Posterior cingulate gyrus (tissue), 11 donors: ENCODE measurements at regions of chr7 and their contacts with region 1.

Region 1: GRCh38 chr7:73667344-73668102 is at the start of gene VPS37D:
- DNase-seq: peak; percentile 73 to 98 (median 88)

Region 2: DNA sequence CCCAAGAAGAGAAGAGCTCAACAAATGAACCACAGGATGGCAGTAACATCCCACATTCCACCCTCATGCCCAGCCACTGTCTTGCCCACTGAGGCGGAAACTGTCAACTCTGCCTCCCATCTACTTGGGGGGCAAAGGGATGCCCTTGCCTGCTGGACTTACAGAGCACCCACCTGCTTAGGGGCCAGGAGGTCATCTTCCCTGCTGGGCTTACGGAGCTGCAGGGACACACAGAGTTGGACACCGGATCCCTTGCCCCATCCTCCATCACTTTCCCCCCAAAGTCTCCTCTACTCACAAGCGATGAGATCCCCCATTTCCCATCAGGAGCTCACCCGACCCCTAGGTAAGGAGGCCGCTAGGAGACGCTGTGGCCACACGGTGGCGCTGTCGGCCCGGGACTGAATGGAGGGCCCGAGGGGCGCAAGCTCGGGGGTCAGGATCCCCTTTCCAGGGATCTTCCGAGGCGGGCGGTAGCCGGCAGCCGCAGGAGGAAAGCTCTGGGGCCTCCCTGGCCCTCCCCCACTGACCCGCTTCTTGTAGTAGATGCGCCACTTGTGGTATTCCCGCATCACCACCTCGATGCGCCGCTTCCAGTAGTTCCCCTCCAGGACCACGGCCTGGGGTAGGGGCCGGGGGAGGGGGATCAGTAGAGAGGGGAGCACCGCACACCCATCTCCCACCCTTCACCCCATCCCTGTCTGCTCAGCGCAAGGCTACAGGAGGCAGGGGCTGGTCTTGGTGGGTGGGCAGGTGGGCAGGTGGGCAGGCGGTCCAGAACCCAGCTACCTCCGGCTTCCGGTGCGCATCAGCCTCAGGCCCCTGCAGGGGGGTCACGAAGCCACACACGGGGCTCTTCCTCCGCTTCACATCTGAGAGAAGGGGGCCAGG is 60.5 kb before region 1 on chr7:
- intact Hi-C with region 1: loop called (anchors 10 kb)
- DNase-seq: peak in 7 of 10 donors; percentile 45 to 92 (median 63)

Region 3: DNA sequence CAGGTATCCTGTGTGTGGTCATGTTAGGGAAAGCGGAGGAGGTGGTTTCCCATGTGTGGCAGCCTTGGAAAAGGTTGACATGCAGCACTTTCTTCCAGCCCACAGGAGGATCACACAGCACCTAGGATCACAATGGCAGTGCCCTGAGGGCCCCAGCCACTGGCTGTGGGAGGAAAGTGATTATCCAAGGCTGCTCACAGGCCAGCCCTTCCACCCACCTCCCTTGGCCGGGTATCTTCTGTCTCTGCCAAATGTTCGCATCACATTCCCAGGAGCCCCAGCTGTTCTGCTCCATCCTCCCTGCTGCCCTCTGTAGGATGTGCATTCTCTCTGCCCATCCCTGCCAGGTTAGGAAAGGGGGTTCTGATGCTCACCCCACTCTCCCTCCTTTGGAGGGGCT is 40.7 kb before region 1 on chr7:
- intact Hi-C with region 1: loop called (anchors 5 kb)
- DNase-seq: no peak

Region 4: DNA sequence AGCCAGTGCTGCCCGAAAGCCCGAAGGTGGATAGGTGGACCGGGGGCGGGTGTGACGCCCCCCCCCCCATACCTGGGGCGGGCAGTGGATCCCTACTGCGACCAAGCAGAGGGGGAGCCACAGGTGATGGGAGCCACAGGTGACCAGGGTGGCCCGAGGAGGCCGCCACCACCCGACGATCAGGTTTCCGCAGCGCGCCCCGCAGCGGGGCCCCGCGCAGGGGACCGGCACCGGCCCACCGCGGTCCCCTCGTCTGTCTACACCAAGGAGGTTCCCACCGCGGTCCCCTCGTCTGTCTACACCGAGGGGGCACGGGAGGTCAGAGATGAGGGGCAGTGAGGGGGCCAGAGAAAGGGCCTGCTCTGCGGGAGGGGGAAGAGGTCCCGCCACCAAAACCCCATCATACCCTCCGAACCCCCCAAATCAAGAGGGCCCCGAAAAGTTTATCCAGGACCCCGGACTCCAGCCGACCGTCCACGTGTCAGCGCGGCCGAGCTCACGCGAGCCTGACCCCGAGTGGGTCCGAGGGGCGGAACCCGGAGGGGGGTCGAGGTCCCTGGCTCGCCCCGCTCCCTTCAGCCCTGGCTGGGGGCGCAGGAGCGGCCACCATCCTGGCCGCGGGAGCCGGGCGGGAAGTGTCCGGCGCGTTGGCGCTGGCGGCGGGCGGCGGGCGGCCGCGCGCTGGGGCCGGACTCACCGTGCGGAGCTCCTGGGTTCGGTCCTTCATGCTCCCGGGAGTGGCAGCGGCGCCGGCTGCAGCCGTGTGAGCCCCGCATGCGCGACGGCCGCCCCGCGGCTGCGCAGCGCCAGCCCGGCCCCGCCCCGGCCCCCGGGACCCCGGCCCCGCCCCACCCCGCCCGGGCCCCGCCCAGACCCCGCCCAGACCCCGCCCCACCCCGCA is 51.6 kb after region 1 on chr7 and contains the start of gene STX1A:
- intact Hi-C with region 1: loop called (anchors 5 kb)
- DNase-seq: peak in 7 of 10 donors; percentile 54 to 97 (median 71)

Region 5: DNA sequence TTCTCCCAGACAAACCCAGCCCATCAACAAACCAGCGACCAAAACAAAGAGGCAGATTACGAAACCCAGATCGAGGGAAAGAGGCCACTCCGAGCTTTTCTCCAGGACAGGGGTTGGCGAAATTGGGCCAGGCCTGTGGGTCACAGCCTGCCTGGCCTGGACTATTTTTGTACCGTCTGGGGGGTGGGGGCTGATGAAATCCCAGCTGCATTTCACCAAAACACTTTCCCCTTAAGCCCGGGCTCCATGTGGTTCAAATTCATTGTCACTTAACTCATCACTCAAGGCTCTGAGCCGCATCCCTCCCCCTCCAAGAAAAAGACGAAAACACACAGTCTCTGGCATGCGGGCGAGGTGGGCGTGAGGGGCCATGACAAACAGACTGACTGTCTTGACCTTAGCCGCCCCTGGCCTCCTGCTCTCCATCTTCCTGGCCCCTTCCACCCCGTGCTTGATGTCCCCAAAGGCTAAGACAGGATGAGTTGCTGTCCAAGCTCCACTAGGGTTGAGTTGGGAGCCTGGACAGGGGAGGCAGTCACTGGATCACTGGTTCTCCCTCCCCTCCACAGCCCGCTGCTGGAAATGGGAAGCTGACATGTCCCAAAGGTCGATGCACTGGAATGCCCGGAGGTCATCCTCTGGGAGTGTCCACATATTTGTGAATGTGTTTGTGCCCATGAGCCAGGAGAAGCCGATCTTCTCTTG is 212.6 kb after region 1 on chr7:
- intact Hi-C with region 1: no loop called
- DNase-seq: no peak